ENCODE measurements at regions of chr2 and their contacts with region 1.

Region 1: GRCh38 chr2:112584134-112584890 is at the start of gene CHCHD5:
- DNase-seq: peak; percentile 97
- H3K4me3 ChIP-seq: peak within 1 kb of the TSS; percentile 38 to 85 (median 56)
- H3K27ac ChIP-seq: peak within 1 kb of the TSS; percentile 90 to 97 (median 96)
- H3K4me1 ChIP-seq: peaks cover 9 to 54% (median 31%) of the 10 kb centered on the region in 6 donors
- H3K27me3 ChIP-seq: no peaks in the 10 kb centered on the region
- CTCF ChIP-seq: peak in 6 of 11 experiments; percentile 29 to 55 (median 39)
- POLR2A ChIP-seq: peak in 1 of 3 donors; percentile 14
- total RNA-seq, gene CHCHD5: 11.9 to 22.4 (median 16.1) TPM

Region 2: GRCh38 chr2:112481050-112481527 is 103.2 kb before region 1 on chr2:
- intact Hi-C with region 1: loop called (anchors 10 kb)
- DNase-seq: peak; percentile 96
- H3K4me3 ChIP-seq: peak overlapping the region; percentile 38 to 95 (median 87)
- H3K27ac ChIP-seq: peak overlapping the region; percentile 37 to 96 (median 92)
- H3K4me1 ChIP-seq: peaks cover 13 to 48% (median 27%) of the 10 kb centered on the region in 6 donors
- H3K27me3 ChIP-seq: no peaks in the 10 kb centered on the region
- CTCF ChIP-seq: peak; percentile 56 to 85 (median 80)
- POLR2A ChIP-seq: no peak